Activated T-helper 2 cell treated with anti-CD3 and anti-CD28 coated beads, Interferon-gamma antibody, Interleukin-2, Interleukin-4, amounts not matched to agents 10 μg/mL and 5 μg/mL and 100 μg/mL, durations not matched to agents 14 hours and 24 hours and 36 hours (primary cell): ENCODE measurements at regions of chr12 and their contacts with region 1.

Region 1: GRCh38 chr12:75480469-75480949 is at the start of gene GLIPR1:
- DNase-seq: peak; percentile 64
- H3K4me3 Mint-ChIP-seq: peak within 1 kb of the TSS; percentile 87
- H3K27ac Mint-ChIP-seq: peak within 1 kb of the TSS; percentile 92
- H3K4me1 Mint-ChIP-seq: peaks cover 73% of the 10 kb centered on the region
- H3K27me3 Mint-ChIP-seq: peaks cover 1% of the 10 kb centered on the region
- total RNA-seq, gene GLIPR1: 7.4 and 7.6 TPM in 2 replicates

Region 2: DNA sequence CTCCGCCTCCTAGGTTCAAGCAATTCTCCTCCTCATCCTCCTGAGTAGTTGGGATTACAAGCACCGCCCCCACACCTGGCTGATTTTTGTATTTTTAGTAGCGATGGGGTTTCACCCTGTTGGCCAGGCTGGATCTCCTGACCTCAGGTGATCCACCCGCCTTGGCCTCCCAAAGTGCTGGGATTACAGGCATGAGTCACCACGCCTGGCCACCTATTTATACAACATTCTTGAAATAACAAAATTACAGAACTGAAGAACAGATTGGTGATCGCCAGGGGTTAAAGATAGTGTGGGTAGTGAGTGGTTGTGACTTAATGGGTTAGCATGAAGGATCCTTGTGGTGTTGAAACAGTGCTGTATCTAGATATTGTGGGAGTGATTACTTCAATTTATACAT is 138.7 kb before region 1 on chr12:
- intact Hi-C with region 1: loop called (anchors 1 kb)
- DNase-seq: no peak
- H3K4me3 Mint-ChIP-seq: no peak overlapping the region
- H3K27ac Mint-ChIP-seq: no peak overlapping the region
- H3K4me1 Mint-ChIP-seq: peaks cover 28% of the 10 kb centered on the region
- H3K27me3 Mint-ChIP-seq: peaks cover 43% of the 10 kb centered on the region

Region 3: DNA sequence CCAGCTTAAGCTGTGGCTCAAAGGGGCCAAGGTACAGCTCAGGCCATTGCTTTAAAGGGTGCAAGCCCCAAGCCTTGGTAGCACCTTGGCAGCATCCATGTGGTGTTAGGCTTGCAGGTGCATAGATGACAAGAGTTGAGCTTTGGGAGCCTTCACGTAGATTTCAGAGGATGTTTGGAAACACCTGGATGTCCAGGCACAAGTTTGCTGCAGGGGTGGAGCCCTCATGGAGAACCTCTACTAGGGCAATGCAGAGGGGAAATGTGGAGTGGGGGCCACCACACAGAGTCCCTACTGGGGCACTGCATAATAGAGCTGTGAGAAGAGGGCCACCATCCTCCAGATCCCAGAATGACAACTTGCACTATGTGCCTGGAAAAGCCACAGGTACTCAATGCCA is 51.7 kb before region 1 on chr12:
- intact Hi-C with region 1: no loop called
- DNase-seq: no peak
- H3K4me3 Mint-ChIP-seq: no peak overlapping the region
- H3K27ac Mint-ChIP-seq: no peak overlapping the region
- H3K4me1 Mint-ChIP-seq: no peaks in the 10 kb centered on the region
- H3K27me3 Mint-ChIP-seq: peaks cover 3% of the 10 kb centered on the region

Region 4: GRCh38 chr12:75511116-75512048 is 30.9 kb after region 1 on chr12 and contains the start of gene KRR1:
- intact Hi-C with region 1: loop called (anchors 1 kb)
- DNase-seq: peak; percentile 91
- H3K4me3 Mint-ChIP-seq: peak within 1 kb of the TSS; percentile 96
- H3K27ac Mint-ChIP-seq: peak within 1 kb of the TSS; percentile 98
- H3K4me1 Mint-ChIP-seq: peaks cover 30% of the 10 kb centered on the region
- H3K27me3 Mint-ChIP-seq: no peaks in the 10 kb centered on the region
- total RNA-seq, gene KRR1: 114 and 119 TPM in 2 replicates

Region 5: DNA sequence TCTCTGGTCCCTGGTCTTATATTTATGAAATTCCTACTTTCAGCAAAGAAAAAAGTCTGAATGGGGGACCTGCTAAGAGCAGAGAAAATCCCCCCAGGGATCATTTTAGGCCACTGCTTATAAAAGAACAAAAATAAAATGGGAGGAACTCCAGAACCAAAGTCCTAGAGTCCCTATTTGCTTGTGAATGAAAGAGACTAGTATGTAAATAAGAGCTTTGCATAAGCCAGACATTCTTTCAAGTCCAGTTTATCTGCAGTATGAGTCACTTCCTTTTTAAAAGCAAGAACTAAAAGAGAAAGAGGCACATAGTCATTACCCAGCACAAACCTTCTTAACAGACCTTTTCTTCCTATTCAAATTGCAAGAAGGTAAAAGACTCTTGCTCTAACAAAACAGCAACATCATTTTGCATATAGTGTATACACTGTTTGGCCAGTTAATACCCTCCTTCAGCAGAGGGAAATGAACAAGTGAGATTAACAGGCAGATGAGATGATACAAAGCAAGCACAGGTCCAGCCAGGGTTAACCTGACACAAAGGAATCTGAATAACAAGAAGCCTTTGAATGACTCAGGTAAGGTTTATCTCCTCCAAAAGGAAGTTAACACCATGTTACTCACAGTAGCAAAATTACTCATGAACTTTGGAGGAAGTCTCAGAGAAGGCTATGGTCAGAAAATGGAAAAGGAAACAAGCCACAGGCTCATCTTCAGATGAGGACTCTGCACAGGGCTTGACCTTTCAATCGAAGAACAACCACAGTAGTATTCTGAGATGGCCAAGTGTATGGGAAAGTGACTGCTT is 463.8 kb after region 1 on chr12:
- intact Hi-C with region 1: loop called (anchors 2 kb)
- DNase-seq: no peak
- H3K4me3 Mint-ChIP-seq: peak overlapping the region; percentile 52
- H3K27ac Mint-ChIP-seq: peak overlapping the region; percentile 97
- H3K4me1 Mint-ChIP-seq: peaks cover 32% of the 10 kb centered on the region
- H3K27me3 Mint-ChIP-seq: no peaks in the 10 kb centered on the region

Region 6: GRCh38 chr12:76277480-76277879 is 797.0 kb after region 1 on chr12:
- intact Hi-C with region 1: loop called (anchors 5 kb)
- DNase-seq: no peak
- H3K4me3 Mint-ChIP-seq: no peak overlapping the region
- H3K27ac Mint-ChIP-seq: no peak overlapping the region
- H3K4me1 Mint-ChIP-seq: peaks cover 14% of the 10 kb centered on the region
- H3K27me3 Mint-ChIP-seq: peaks cover 9% of the 10 kb centered on the region

Region 7: DNA sequence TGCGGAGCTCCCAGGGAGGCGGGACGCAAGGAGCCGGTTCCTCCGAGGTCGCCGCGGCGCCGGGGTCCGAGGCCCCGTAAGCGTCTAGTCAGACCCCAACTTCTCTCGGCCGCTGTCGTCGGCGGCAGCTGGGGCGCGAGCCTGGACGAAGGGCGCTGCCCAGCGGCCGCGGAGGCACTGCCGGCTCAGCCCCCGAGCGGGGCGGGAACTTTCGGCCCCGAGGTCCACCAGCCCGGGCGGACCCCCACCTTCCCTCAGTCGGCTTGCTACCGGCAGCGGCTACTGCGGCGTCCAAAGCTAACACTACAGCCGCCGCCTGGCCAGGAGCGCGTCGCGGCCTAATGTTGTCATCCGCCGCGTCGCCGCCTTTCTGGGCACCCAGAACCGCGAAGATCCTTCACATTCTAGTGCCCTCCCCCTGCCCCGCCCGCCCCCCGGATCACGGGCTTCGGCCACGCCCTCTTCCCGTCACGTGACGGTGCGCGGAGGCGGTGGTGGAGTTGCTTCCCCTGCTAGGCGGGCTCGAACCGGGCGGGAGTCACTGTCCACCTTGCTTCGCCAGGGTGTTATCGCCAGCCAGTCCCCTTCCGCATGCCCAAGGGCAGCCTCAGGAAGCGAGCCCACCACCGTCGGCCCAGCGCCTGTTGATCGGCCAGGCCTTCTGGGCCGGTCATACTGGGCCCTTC is 1079.0 kb after region 1 on chr12 and contains the start of gene OSBPL8:
- intact Hi-C with region 1: loop called (anchors 2 kb)
- DNase-seq: peak; percentile 89
- H3K4me3 Mint-ChIP-seq: peak within 1 kb of the TSS; percentile 93
- H3K27ac Mint-ChIP-seq: peak within 1 kb of the TSS; percentile 96
- H3K4me1 Mint-ChIP-seq: peaks cover 39% of the 10 kb centered on the region
- H3K27me3 Mint-ChIP-seq: no peaks in the 10 kb centered on the region
- total RNA-seq, gene OSBPL8: 87.9 TPM in 2 replicates